ENCODE measurements at regions of chr12 and their contacts with region 1.

Region 1: GRCh38 chr12:49130151-49131050 is 794 bp downstream of the TUBA1B start:
- DNase-seq: peak; percentile 87 to 95 (median 94)
- ATAC-seq: peak; percentile 77
- H3K4me3 ChIP-seq: peak overlapping the region; percentile 92
- H3K4me3 Mint-ChIP-seq: peak overlapping the region; percentile 95 to 99 (median 98)
- H3K27ac ChIP-seq: peak overlapping the region; percentile 95
- H3K27ac Mint-ChIP-seq: peak overlapping the region; percentile 97 to 99 (median 99)
- H3K4me1 ChIP-seq: peaks cover 24 to 27% of the 10 kb centered on the region in 2 donors
- H3K4me1 Mint-ChIP-seq: peaks cover 24 to 61% (median 55%) of the 10 kb centered on the region in 7 donors
- H3K27me3 ChIP-seq: no peaks in the 10 kb centered on the region
- H3K27me3 Mint-ChIP-seq: peaks cover 0 to 7% (median 0%) of the 10 kb centered on the region in 5 donors

Region 2: DNA sequence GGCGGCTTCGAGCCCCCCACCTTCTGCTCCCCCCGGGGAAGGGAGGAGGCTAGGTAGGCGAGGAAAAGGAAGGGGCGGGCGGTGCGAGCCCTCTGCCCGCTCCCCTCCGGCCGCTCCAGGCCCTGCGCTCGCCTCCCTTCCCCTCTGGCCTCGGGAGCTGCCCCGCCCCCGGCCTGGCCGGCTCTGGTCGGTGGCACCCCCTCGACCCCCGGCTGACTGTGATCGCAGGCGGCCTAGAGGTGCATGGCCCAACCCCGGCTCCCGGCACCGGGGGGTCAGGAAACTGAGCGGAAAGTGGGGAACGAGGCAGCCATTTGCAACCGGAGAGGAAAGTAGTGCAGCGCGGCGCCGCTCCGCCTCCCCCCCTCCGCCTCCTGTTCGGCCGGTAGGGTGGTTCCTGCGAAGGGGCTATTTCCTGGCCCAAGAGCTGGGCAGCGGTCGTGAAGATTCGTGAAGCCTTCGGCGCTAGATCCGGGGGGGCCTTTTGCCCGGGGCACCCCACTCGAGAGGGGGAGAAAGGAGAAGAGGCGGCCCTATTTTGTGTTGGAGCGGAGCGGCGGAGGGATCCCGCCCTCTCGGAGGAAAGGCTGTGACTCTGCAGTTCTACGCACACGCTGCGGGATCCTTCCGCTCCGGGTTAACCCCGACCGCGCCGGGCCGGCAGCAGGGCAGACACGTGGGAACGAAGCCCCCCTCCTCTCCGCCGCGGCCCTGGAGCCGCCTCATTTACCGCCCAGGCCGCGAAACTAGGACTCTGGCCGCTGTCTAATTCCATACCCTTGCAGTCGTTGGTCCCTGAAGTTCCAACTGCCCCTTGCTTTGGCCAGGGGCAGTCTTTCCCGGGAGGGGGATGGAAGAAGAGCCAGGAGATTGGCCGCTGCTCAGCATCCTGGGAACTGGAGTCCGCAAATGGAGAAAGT is 69.9 kb before region 1 on chr12 and contains the start of gene KMT2D:
- CTCF ChIA-PET with region 1: interaction called, 8 read pairs
- POLR2A ChIA-PET with region 1: interaction called, 35 read pairs
- intact Hi-C with region 1: loop called (anchors 1 to 2 kb)
- DNase-seq: peak; percentile 80 to 94 (median 91)
- ATAC-seq: peak; percentile 86
- H3K4me3 ChIP-seq: peak within 1 kb of the TSS; percentile 87
- H3K4me3 Mint-ChIP-seq: peak within 1 kb of the TSS; percentile 91 to 98 (median 95)
- H3K27ac ChIP-seq: peak within 1 kb of the TSS; percentile 87
- H3K27ac Mint-ChIP-seq: peak within 1 kb of the TSS; percentile 90 to 99 (median 97)
- H3K4me1 ChIP-seq: peaks cover 38 to 40% of the 10 kb centered on the region in 2 donors
- H3K4me1 Mint-ChIP-seq: peaks cover 44 to 55% (median 51%) of the 10 kb centered on the region in 7 donors
- H3K27me3 ChIP-seq: no peaks in the 10 kb centered on the region
- H3K27me3 Mint-ChIP-seq: no peaks in the 10 kb centered on the region
- total RNA-seq, gene KMT2D: 129 to 167 (median 151) TPM

Region 3: DNA sequence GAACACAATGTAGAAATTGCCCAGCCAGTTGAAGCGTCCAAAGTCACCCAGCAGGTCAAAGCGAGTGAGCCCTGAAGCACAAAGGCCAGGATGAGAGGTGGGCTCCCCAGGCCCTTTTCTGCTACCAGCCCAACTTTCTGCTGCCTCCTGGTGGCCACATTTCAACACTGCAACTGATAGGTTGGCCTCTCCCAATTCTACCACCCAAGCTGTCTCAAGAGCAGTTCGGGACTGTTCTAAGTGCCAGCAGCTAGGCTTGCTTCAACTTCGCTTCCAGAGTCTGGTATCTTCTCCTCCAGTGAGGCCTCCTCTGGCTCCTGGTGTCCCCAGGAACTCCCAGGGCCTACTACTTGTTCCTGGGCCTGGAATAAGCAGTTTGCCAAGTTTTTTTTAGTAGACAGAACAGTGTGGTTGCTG is 32.4 kb before region 1 on chr12:
- CTCF ChIA-PET with region 1: interaction called, 12 read pairs
- POLR2A ChIA-PET with region 1: interaction called, 21 read pairs
- intact Hi-C with region 1: no loop called
- DNase-seq: peak; percentile 38 to 65 (median 58)
- ATAC-seq: peak; percentile 78
- H3K4me3 ChIP-seq: no peak overlapping the region
- H3K4me3 Mint-ChIP-seq: no peak overlapping the region
- H3K27ac ChIP-seq: no peak overlapping the region
- H3K27ac Mint-ChIP-seq: peak overlapping the region in 2 of 9 donors; percentile 23 to 51
- H3K4me1 ChIP-seq: peaks cover 9 to 10% of the 10 kb centered on the region in 2 donors
- H3K4me1 Mint-ChIP-seq: peaks cover 0 to 22% (median 16%) of the 10 kb centered on the region in 7 donors
- H3K27me3 ChIP-seq: peaks cover 4 to 6% of the 10 kb centered on the region in 2 donors
- H3K27me3 Mint-ChIP-seq: peaks cover 14 to 23% (median 21%) of the 10 kb centered on the region in 5 donors

Region 4: DNA sequence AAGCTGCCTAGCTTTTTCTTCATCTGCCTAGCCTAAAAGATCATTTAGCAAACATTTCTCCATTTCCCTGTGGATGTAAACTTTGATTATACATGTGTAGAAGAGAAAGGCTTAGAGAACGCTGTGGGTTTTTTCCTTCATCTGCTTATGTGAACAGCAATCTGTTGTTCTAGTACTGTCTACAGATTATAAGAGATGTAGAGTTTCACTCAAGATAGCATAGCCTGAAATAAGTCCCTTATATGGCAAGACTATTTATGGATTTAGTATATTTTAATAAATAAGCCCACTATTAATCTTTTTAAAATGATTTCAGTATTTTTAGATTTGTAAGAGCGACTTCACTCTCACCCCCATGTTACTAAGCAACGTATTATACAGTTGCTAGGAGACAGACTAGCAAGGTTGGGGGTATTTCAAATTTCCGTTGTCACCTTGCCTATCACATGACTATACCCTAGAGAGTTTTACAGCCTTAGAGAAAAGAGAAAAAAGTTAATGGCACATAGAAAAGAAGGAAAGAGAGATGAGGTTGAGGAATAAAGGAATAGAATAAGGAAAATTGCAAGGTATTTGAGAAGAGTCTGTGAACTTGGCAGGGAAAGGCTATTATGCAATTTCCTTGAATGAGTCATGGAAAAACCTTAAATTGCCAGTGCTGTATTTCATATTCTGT is 70.7 kb after region 1 on chr12:
- CTCF ChIA-PET with region 1: no interaction called
- POLR2A ChIA-PET with region 1: interaction called, 15 read pairs
- intact Hi-C with region 1: no loop called
- DNase-seq: peak in 6 of 9 donors; percentile 30 to 64 (median 46)
- ATAC-seq: peak; percentile 92
- H3K4me3 ChIP-seq: no peak overlapping the region
- H3K4me3 Mint-ChIP-seq: no peak overlapping the region
- H3K27ac ChIP-seq: no peak overlapping the region
- H3K27ac Mint-ChIP-seq: peak overlapping the region in 4 of 9 donors; percentile 4 to 75 (median 22)
- H3K4me1 ChIP-seq: peaks cover 0 to 6% of the 10 kb centered on the region in 2 donors
- H3K4me1 Mint-ChIP-seq: peaks cover 7 to 15% (median 14%) of the 10 kb centered on the region in 7 donors
- H3K27me3 ChIP-seq: no peaks in the 10 kb centered on the region
- H3K27me3 Mint-ChIP-seq: peaks cover 0 to 19% (median 0%) of the 10 kb centered on the region in 5 donors

Region 5: DNA sequence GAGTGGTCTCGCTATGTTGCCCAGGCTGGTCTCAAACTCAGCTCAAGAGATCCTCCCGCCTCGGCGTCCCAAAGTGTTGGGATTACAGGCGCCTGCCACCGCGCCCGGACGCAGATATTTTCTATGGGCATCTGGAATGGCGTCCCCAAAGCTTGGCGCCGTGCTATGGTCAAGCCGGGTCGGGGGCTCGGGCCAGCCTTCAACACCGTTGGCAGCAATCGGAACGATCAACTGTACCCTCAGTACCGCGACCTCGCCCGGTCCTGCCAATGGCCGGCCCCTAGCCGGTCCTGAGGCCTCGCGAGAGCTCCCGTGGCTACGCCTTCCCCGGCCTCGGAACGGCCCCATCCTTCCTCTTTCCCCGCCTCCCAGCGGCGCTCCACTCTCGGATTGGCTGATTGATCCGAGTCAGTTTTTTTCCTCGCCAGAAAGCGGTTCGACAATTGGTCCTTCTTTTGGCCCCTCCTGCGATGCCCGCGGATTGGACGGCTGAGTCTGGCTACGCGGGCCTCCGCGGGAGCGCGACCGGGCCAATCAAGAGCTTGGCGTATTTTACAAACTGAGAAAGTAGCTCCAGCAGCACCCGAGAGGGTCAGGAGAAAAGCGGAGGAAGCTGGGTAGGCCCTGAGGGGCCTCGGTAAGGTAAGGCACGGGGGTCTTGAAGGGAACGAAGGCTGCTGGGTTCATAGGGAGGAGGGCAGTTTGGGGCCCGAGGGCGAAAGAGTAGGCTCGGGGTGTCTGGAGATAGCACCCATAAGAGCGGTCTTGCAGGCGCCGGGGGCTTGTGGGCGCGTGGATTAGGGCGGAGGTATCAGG is 192.5 kb after region 1 on chr12 and contains the start of gene TROAP:
- CTCF ChIA-PET with region 1: no interaction called
- POLR2A ChIA-PET with region 1: interaction called, 5 read pairs
- intact Hi-C with region 1: loop called (anchors 5 kb)
- DNase-seq: peak; percentile 89 to 98 (median 96)
- ATAC-seq: peak; percentile 97
- H3K4me3 ChIP-seq: peak within 1 kb of the TSS; percentile 75
- H3K4me3 Mint-ChIP-seq: peak within 1 kb of the TSS; percentile 86 to 98 (median 92)
- H3K27ac ChIP-seq: peak within 1 kb of the TSS; percentile 72
- H3K27ac Mint-ChIP-seq: peak within 1 kb of the TSS; percentile 29 to 95 (median 83)
- H3K4me1 ChIP-seq: peaks cover 5 to 14% of the 10 kb centered on the region in 2 donors
- H3K4me1 Mint-ChIP-seq: peaks cover 16 to 25% (median 19%) of the 10 kb centered on the region in 7 donors
- H3K27me3 ChIP-seq: no peaks in the 10 kb centered on the region
- H3K27me3 Mint-ChIP-seq: peaks cover 0 to 5% (median 0%) of the 10 kb centered on the region in 5 donors
- total RNA-seq, gene TROAP: 0.83 to 58.2 (median 1.3) TPM in 4 of 5 experiments, not detected in the other